Activated CD4-positive, alpha-beta T cell treated with anti-CD3 and anti-CD28 coated beads for 36 hours (primary cell): ENCODE measurements at regions of chr7 and their contacts with region 1.

Region 1: GRCh38 chr7:44587843-44588711 is 6.0 kb upstream of the TMED4 start:
- DNase-seq: peak; percentile 75
- ATAC-seq: peak; percentile 89
- H3K4me3 Mint-ChIP-seq: no peak overlapping the region
- H3K27ac Mint-ChIP-seq: peak overlapping the region; percentile 31
- H3K4me1 Mint-ChIP-seq: peaks cover 8% of the 10 kb centered on the region
- H3K27me3 Mint-ChIP-seq: no peaks in the 10 kb centered on the region

Region 2: DNA sequence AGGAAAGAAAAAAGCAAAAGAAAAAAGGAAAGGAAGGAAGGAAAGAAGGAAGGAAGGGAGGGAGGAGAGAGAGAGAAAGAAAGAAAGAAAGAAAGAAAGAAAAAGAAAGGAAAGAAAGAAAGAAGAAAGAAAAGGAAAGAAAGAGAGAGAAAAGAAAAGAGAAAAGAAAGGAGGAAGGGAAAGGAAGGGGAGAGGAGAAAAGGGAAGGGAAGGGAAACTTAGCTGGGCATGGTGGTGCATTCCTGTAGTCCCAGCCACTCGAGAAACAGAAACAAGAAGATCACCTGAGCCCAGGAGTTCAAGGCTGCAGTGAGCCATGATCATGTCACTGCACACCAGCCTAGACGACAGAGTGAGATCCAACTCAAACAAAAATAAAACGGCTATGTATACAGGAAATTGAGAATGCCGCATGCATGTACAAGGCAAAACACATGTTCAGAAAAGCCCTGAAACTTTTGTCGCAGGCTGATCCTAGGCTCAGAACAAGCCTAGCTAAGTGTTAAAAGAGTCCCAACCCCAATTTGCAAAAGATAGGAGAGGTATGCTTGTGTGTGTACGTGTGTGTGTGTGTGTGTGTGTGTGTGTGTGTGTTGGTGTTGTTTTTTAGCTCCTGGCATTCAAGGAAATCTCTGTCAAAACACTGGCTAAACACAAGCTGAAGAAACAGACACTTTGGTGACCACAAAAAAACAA is 40.4 kb before region 1 on chr7:
- CTCF ChIA-PET with region 1: no interaction called
- POLR2A ChIA-PET with region 1: no interaction called
- intact Hi-C with region 1: no loop called
- DNase-seq: no peak
- ATAC-seq: no peak
- H3K4me3 Mint-ChIP-seq: no peak overlapping the region
- H3K27ac Mint-ChIP-seq: no peak overlapping the region
- H3K4me1 Mint-ChIP-seq: peaks cover 11% of the 10 kb centered on the region
- H3K27me3 Mint-ChIP-seq: peaks cover 2% of the 10 kb centered on the region

Region 3: GRCh38 chr7:44921607-44922359 is 333.7 kb after region 1 on chr7:
- CTCF ChIA-PET with region 1: no interaction called
- POLR2A ChIA-PET with region 1: no interaction called
- intact Hi-C with region 1: loop called (anchors 1 kb)
- DNase-seq: peak; percentile 99
- ATAC-seq: peak; percentile 99
- H3K4me3 Mint-ChIP-seq: no peak overlapping the region
- H3K27ac Mint-ChIP-seq: peak overlapping the region; percentile 47
- H3K4me1 Mint-ChIP-seq: peaks cover 15% of the 10 kb centered on the region
- H3K27me3 Mint-ChIP-seq: peaks cover under 1% of the 10 kb centered on the region